ENCODE measurements at regions of chr1 and their contacts with region 1.

Region 1: DNA sequence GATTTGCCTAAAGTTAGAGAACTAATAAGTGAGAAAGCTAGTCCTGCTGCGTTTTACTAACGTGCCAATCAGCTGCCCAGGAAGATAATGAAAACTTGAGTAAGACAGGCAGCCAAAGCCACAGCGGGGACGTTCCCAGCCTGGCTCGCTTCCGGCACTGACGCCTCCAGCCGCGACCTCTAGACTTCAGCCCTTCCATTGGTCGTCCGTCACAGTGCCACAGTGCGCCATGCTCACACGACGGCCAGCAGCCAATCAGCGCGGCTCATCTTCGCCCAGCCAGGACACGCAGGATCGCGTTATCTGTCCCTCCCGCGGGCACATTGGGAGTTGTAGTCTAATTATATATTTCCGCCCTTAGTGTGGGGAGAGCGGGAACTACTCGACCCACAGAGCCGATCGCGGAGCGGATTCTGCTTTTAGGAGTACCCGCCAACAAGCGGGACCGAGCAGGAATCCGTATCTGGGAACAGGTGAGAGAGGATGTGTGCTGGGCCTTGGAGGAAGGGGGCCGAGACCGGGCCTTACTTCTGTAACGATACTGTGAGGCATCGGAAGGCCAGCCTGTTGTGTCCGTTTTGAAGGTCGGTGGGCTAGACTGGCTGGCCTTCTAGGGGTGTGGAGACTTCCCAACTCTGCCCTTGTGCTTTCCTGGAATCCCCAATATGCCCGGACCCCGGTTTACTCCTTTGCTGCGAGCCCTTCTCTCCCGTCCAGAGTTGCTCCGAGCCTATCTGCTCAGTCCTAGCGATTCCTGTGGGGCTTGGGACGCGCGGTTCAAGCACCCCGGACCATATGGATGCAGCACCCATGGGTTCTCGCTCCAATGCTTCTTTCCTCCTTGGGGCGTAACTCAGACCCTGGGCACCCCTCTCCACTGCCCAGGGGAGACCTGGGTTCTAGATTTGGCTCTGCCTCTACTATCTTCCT is at the start of gene FDPS:
- DNase-seq: peak; percentile 99
- H3K4me3 ChIP-seq: peak within 1 kb of the TSS; percentile 68 to 92 (median 83)
- H3K4me3 Mint-ChIP-seq: peak within 1 kb of the TSS; percentile 95 to 97
- H3K27ac ChIP-seq: peak within 1 kb of the TSS; percentile 83 to 88
- H3K27ac Mint-ChIP-seq: peak within 1 kb of the TSS; percentile 96 to 99 (median 98)
- H3K4me1 ChIP-seq: peaks cover 19 to 23% of the 10 kb centered on the region in 2 donors
- H3K4me1 Mint-ChIP-seq: peaks cover 31% of the 10 kb centered on the region
- H3K27me3 ChIP-seq: no peaks in the 10 kb centered on the region
- H3K27me3 Mint-ChIP-seq: peaks cover 2 to 6% (median 2%) of the 10 kb centered on the region in 3 donors
- CTCF ChIP-seq: no peak
- polyA plus RNA-seq, gene FDPS: 92.5 to 123 (median 117) TPM

Region 2: DNA sequence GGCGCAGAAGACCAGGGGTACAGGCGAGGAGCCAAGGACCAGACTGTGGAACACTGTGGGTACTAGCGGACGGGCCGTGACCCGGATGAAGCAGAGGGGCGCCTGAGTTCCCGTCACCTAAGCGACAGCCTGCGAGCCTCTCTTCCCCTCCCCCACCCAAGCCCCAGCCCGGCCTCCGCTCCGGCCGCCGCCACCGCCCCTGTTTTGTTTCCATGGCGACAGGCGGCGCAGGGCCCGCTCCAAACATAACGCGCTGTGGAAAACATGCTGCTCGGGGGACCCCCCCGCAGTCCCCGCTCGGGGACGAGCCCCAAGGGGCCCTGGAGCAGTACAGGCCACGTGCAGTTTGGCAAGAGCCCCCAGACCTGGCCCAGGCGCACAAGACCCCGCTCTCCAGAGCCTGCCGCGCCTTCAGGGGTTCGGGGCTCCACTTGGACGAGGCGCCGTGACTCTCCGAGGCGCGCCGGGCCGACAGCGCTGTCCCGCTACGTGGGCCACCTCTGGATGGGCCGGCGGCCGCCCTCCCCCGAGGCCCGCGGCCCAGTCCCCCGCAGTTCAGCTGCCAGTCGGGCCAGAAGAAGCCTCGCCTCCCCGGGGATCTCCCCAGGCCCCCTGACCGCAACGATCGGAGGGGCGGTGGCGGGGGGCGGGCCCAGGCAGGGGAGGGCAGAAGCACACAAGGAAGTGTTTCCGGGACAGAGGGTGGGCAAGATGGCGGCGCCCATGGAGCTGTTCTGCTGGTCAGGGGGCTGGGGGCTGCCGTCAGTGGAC is 100.0 kb before region 1 on chr1 and contains the start of gene MTX1:
- intact Hi-C with region 1: loop called in 1 of 2 experiments (anchors 5 kb)
- DNase-seq: peak; percentile 90 to 93 (median 92)
- H3K4me3 ChIP-seq: peak within 1 kb of the TSS; percentile 90 to 94 (median 92)
- H3K4me3 Mint-ChIP-seq: peak within 1 kb of the TSS; percentile 83 to 89
- H3K27ac ChIP-seq: peak within 1 kb of the TSS; percentile 98 to 100
- H3K27ac Mint-ChIP-seq: peak within 1 kb of the TSS; percentile 97 to 100 (median 99)
- H3K4me1 ChIP-seq: peaks cover 52 to 55% of the 10 kb centered on the region in 2 donors
- H3K4me1 Mint-ChIP-seq: peaks cover 47% of the 10 kb centered on the region
- H3K27me3 ChIP-seq: no peaks in the 10 kb centered on the region
- H3K27me3 Mint-ChIP-seq: no peaks in the 10 kb centered on the region
- CTCF ChIP-seq: no peak
- polyA plus RNA-seq, gene MTX1: 79.7 to 101 (median 86.0) TPM

Region 3: GRCh38 chr1:155261852-155262673 is 46.7 kb before region 1 on chr1 and contains the start of gene SCAMP3:
- intact Hi-C with region 1: loop called in 1 of 2 experiments (anchors 2 kb)
- DNase-seq: peak; percentile 92 to 98 (median 98)
- H3K4me3 ChIP-seq: peak within 1 kb of the TSS; percentile 50 to 95 (median 77)
- H3K4me3 Mint-ChIP-seq: peak within 1 kb of the TSS; percentile 93 to 94
- H3K27ac ChIP-seq: peak within 1 kb of the TSS; percentile 56 to 83
- H3K27ac Mint-ChIP-seq: peak within 1 kb of the TSS; percentile 92 to 97 (median 95)
- H3K4me1 ChIP-seq: peaks cover 14 to 17% of the 10 kb centered on the region in 2 donors
- H3K4me1 Mint-ChIP-seq: peaks cover 20% of the 10 kb centered on the region
- H3K27me3 ChIP-seq: no peaks in the 10 kb centered on the region
- H3K27me3 Mint-ChIP-seq: no peaks in the 10 kb centered on the region
- CTCF ChIP-seq: no peak
- polyA plus RNA-seq, gene SCAMP3: 54.9 to 69.8 (median 64.9) TPM

Region 4: GRCh38 chr1:155323798-155324610 is 15.2 kb after region 1 on chr1:
- intact Hi-C with region 1: loop called (anchors 2 kb)
- DNase-seq: peak; percentile 90 to 94 (median 94)
- H3K4me3 ChIP-seq: peak overlapping the region; percentile 62 to 84 (median 80)
- H3K4me3 Mint-ChIP-seq: peak overlapping the region; percentile 83 to 90
- H3K27ac ChIP-seq: peak overlapping the region; percentile 71 to 91
- H3K27ac Mint-ChIP-seq: peak overlapping the region; percentile 74 to 96 (median 89)
- H3K4me1 ChIP-seq: peaks cover 31 to 56% of the 10 kb centered on the region in 2 donors
- H3K4me1 Mint-ChIP-seq: peaks cover 50% of the 10 kb centered on the region
- H3K27me3 ChIP-seq: no peaks in the 10 kb centered on the region
- H3K27me3 Mint-ChIP-seq: peaks cover 2 to 7% (median 2%) of the 10 kb centered on the region in 3 donors
- CTCF ChIP-seq: no peak